B cell (primary cell): ENCODE measurements at regions of chr13 and their contacts with region 1.

Region 1: DNA sequence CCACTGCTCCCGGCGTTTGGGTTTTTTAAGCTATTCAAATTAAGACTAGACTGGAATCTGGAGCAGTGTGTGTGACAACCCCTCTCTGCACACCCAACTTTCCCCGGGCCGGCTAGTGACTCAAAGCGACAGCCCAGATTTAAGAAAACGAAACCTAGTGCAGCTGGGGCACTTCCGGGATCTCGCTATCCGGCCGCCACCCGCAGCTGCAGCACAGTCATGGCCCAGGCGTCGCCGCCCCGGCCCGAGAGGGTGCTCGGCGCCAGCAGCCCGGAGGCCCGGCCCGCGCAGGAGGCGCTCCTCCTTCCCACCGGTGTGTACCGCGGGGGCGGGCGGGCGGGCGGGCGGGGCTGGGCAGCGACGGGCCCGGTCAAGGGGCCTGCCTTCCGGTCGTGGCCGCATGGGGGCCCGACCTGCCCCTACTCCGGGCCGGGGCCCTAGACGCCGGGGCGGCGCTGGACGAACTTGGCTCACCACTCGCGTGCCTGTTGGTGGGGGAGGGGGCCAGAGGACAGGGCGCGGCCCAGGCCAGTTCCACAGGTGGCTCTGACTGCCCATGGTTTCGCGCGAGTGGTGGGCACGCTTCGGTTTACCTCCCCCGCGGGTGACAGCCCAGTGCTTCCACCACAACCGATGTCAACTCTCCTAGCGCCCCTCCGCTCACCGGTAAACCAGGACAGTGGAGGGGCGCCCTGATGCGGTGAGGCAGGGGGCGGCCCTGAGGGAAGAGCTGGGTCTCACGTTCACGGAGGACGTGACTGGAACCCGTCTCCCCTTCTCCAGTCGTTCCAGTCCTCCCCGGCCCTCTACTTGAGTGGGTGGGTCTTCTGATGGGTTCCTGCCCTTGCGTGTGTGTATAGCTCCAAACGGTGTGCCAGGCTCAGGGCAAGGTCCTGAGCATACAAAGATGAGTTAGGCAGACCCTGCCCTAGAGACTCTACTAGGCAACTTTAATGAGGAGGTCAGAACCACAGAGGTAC is at the start of gene PHF11:
- DNase-seq: peak; percentile 92
- ATAC-seq: peak; percentile 80
- H3K4me3 ChIP-seq: peak within 1 kb of the TSS; percentile 67 to 90 (median 77)
- H3K4me3 Mint-ChIP-seq: peak within 1 kb of the TSS; percentile 95
- H3K27ac ChIP-seq: peak within 1 kb of the TSS; percentile 89 to 95
- H3K27ac Mint-ChIP-seq: peak within 1 kb of the TSS; percentile 99
- H3K4me1 ChIP-seq: peaks cover 6 to 20% of the 10 kb centered on the region in 2 donors
- H3K4me1 Mint-ChIP-seq: peaks cover 40% of the 10 kb centered on the region
- H3K27me3 ChIP-seq: no peaks in the 10 kb centered on the region
- H3K27me3 Mint-ChIP-seq: no peaks in the 10 kb centered on the region
- CTCF ChIP-seq: no peak
- total RNA-seq, gene PHF11: 176 and 181 TPM in 2 replicates

Region 2: GRCh38 chr13:48386816-48387215 is 1109.3 kb before region 1 on chr13:
- CTCF ChIA-PET with region 1: no interaction called
- POLR2A ChIA-PET with region 1: no interaction called
- intact Hi-C with region 1: no loop called
- DNase-seq: no peak
- ATAC-seq: no peak
- H3K4me3 ChIP-seq: no peak overlapping the region
- H3K4me3 Mint-ChIP-seq: no peak overlapping the region
- H3K27ac ChIP-seq: no peak overlapping the region
- H3K27ac Mint-ChIP-seq: no peak overlapping the region
- H3K4me1 ChIP-seq: no peaks in the 10 kb centered on the region
- H3K4me1 Mint-ChIP-seq: no peaks in the 10 kb centered on the region
- H3K27me3 ChIP-seq: no peaks in the 10 kb centered on the region
- H3K27me3 Mint-ChIP-seq: no peaks in the 10 kb centered on the region
- CTCF ChIP-seq: no peak

Region 3: DNA sequence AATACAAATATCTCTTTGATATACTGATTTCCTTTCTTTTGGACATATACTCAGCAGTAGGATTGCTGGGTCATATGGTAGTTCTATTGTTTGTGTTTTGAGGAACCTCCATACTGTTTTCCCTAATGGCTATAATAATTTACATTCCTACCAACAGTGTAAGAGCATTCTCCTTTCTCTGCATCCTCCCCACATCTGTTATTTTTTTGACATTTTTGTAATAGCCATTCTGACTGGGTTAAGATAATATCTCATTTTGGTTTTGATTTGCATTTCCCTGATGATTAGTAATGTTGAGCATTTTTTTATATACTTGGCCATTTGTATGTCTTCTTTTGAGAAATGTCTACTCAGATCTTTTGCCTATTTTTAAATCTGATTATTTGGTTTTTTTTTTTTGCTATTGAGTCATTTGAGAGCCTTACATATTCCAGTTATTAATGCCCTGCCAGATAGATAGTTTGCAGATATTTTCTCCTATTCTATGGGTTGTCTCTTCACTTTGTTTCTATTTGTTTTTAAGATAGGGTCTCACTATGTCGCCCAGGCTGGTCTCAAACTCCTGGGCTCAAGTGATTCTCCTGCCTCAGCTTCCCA is 424.6 kb before region 1 on chr13:
- CTCF ChIA-PET with region 1: no interaction called
- POLR2A ChIA-PET with region 1: no interaction called
- intact Hi-C with region 1: no loop called
- DNase-seq: no peak
- ATAC-seq: no peak
- H3K4me3 ChIP-seq: no peak overlapping the region
- H3K4me3 Mint-ChIP-seq: no peak overlapping the region
- H3K27ac ChIP-seq: no peak overlapping the region
- H3K27ac Mint-ChIP-seq: no peak overlapping the region
- H3K4me1 ChIP-seq: no peaks in the 10 kb centered on the region
- H3K4me1 Mint-ChIP-seq: peaks cover 6% of the 10 kb centered on the region
- H3K27me3 ChIP-seq: no peaks in the 10 kb centered on the region
- H3K27me3 Mint-ChIP-seq: no peaks in the 10 kb centered on the region
- CTCF ChIP-seq: no peak

Region 4: GRCh38 chr13:49300739-49301589 is 195.1 kb before region 1 on chr13:
- CTCF ChIA-PET with region 1: no interaction called
- POLR2A ChIA-PET with region 1: no interaction called
- intact Hi-C with region 1: loop called (anchors 1 kb)
- DNase-seq: peak; percentile 84
- ATAC-seq: peak; percentile 96
- H3K4me3 ChIP-seq: peak overlapping the region in 4 of 5 experiments; percentile 29 to 57 (median 46)
- H3K4me3 Mint-ChIP-seq: peak overlapping the region; percentile 81
- H3K27ac ChIP-seq: no peak overlapping the region
- H3K27ac Mint-ChIP-seq: peak overlapping the region; percentile 66
- H3K4me1 ChIP-seq: peaks cover 4 to 20% of the 10 kb centered on the region in 2 donors
- H3K4me1 Mint-ChIP-seq: peaks cover 30% of the 10 kb centered on the region
- H3K27me3 ChIP-seq: no peaks in the 10 kb centered on the region
- H3K27me3 Mint-ChIP-seq: no peaks in the 10 kb centered on the region
- CTCF ChIP-seq: peak; percentile 91

Region 5: DNA sequence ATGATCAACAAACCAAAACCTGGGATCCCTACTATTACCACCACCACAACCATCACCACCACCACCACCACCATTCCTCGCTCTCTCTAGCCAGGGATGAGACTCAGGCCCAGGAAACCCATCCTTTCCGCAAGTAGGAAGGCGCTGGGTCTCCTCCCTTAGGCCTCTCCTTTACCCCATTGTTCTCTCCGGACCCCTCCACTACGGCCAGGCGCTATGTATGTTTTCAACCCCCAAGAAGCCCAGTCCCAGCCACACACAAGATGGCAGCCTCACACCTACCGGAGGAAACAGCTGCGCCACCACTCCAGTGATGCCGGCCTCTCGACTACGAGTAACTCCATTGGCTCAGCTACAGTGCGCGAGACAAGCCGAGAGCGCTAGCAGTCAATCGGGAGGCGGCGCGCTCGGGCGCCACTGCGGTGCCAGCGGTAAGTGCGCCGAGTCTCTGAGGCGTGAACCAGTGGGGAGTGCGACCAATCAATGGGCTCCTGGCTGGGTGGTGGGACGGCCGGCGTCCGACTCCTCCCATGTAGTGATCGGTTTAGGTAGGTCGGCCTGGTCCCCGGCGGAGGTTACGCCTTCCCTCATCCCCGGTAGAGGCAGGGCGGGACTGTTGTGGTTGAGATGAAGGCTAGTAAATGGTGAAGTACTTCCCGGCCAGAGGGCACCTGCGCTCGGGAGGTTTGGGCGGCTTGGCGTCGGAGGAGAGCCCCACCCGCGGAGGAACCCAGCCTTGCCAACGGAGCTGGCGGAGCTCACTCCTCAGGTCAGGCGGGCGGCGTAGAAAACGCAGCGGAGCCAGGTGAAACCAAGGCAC is 52.2 kb before region 1 on chr13 and contains the starts of genes CAB39L and SETDB2:
- CTCF ChIA-PET with region 1: interaction called, 4 read pairs
- POLR2A ChIA-PET with region 1: interaction called, 42 read pairs
- intact Hi-C with region 1: loop called (anchors 1 kb)
- DNase-seq: peak; percentile 100
- ATAC-seq: peak; percentile 89
- H3K4me3 ChIP-seq: peak within 1 kb of the TSS; percentile 63 to 98 (median 81)
- H3K4me3 Mint-ChIP-seq: peak within 1 kb of the TSS; percentile 96
- H3K27ac ChIP-seq: peak within 1 kb of the TSS; percentile 97
- H3K27ac Mint-ChIP-seq: peak within 1 kb of the TSS; percentile 99
- H3K4me1 ChIP-seq: peaks cover 33 to 51% of the 10 kb centered on the region in 2 donors
- H3K4me1 Mint-ChIP-seq: peaks cover 71% of the 10 kb centered on the region
- H3K27me3 ChIP-seq: no peaks in the 10 kb centered on the region
- H3K27me3 Mint-ChIP-seq: no peaks in the 10 kb centered on the region
- CTCF ChIP-seq: peak; percentile 34
- total RNA-seq, gene CAB39L: 8.9 and 9.6 TPM in 2 replicates
- total RNA-seq, gene SETDB2: 38.2 and 40.1 TPM in 2 replicates

Region 6: DNA sequence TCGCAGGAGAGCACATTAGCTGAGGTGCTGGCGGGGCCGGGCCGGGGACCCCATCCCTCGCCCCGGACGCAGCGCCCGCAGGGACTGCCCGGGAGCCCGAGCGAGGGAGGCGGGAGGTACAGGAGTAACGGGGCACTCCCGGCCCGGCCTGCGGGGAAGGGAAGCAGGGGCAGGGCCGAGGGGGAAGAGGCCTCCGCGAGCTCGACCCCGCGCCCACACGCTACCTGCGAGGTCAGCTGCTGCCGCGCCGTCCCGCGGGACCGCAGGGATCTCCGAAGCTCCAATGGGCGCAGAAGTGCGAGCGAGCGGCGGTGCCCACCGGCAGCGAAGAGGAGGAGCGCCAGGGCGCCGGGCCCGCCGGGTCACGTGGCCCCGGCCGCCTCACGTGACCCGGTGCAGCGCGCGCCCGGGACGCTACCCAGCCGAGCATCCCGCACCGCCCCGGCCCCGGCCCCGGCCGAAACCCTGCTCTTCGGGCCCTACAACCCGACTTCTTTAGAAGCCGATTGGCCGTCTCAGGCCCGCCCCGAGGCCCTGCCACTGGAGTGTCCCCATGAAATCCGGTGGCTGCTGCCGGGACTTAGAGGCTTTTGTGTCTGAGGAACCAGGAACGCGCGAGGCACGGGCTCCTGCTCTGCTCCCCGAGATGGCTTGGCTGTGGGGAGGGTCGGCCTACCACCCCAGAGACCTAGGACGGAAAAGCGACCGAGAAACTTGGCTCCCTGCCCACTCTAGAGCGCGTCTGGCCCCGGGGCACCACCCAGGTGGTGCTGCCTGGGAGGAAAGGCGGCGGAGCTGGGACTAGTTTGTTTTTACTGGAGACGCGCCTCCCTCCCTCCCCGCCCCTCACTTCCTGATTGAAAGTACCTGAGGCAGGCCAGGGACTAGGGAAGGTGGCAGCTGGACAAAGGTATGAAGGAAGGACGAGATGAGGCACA is 89.4 kb after region 1 on chr13 and contains the start of gene RCBTB1:
- CTCF ChIA-PET with region 1: interaction called, 3 read pairs
- POLR2A ChIA-PET with region 1: interaction called, 11 read pairs
- intact Hi-C with region 1: loop called (anchors 2 kb)
- DNase-seq: peak; percentile 89
- ATAC-seq: peak; percentile 88
- H3K4me3 ChIP-seq: peak within 1 kb of the TSS; percentile 85 to 91 (median 87)
- H3K4me3 Mint-ChIP-seq: peak within 1 kb of the TSS; percentile 96
- H3K27ac ChIP-seq: peak within 1 kb of the TSS; percentile 88 to 90
- H3K27ac Mint-ChIP-seq: peak within 1 kb of the TSS; percentile 92
- H3K4me1 ChIP-seq: peaks cover 17 to 23% of the 10 kb centered on the region in 2 donors
- H3K4me1 Mint-ChIP-seq: peaks cover 29% of the 10 kb centered on the region
- H3K27me3 ChIP-seq: no peaks in the 10 kb centered on the region
- H3K27me3 Mint-ChIP-seq: no peaks in the 10 kb centered on the region
- CTCF ChIP-seq: no peak
- total RNA-seq, gene RCBTB1: 35.2 and 42.1 TPM in 2 replicates

Region 7: GRCh38 chr13:49792550-49793324 is 296.7 kb after region 1 on chr13 and contains the start of gene KPNA3:
- CTCF ChIA-PET with region 1: no interaction called
- POLR2A ChIA-PET with region 1: no interaction called
- intact Hi-C with region 1: loop called (anchors 2 kb)
- DNase-seq: peak; percentile 97
- ATAC-seq: peak; percentile 87
- H3K4me3 ChIP-seq: peak within 1 kb of the TSS; percentile 79 to 88 (median 80)
- H3K4me3 Mint-ChIP-seq: peak within 1 kb of the TSS; percentile 97
- H3K27ac ChIP-seq: peak within 1 kb of the TSS; percentile 85 to 91
- H3K27ac Mint-ChIP-seq: peak within 1 kb of the TSS; percentile 99
- H3K4me1 ChIP-seq: peaks cover 20 to 21% of the 10 kb centered on the region in 2 donors
- H3K4me1 Mint-ChIP-seq: peaks cover 34% of the 10 kb centered on the region
- H3K27me3 ChIP-seq: no peaks in the 10 kb centered on the region
- H3K27me3 Mint-ChIP-seq: peaks cover 4% of the 10 kb centered on the region
- CTCF ChIP-seq: no peak
- total RNA-seq, gene KPNA3: 19.0 and 19.7 TPM in 2 replicates